Natural killer cell (primary cell): ENCODE measurements at regions of chr19 and their contacts with region 1.

Region 1: DNA sequence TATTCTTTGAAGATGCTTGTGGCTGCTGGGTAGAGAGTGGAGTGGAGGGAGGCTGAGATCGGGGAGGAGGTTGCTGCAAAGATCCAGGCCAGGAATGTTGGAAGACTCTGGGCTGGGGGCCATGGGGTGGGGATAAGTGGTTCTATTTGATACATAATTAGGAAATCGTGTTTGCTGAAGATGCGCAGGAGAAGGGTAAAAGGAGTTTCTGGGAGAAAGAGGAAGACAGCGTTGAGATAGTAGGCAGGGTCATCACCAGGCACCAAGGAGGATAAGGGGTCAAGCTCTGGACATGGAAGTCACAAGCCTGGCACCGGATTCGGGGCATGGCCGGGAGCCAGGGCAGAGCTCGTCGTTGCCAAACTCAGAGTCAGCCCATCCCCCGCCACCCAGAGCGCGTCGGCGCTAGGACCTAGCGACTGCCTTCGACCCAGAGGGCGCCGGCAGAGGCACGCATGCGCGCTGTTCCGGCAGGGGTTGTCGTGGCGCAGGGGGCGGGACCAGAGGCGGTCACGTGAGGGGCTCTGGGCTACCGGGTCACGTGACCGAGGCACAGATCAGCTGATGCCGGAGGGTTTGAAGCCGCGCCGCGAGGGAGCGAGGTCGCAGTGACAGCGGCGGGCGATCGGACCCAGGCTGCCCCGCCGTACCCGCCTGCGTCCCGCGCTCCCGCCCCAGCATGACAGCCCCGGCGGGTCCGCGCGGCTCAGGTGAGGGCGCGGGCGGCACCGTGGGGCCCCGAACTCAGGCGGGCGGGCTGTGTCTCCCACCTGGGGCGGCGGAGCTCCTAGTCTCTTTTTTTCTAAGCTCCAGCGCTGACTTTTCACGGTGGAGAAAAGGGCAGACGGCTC is at the start of gene MCOLN1:
- DNase-seq: peak; percentile 100
- ATAC-seq: peak; percentile 93 to 96 (median 95)
- H3K4me3 ChIP-seq: peak within 1 kb of the TSS; percentile 43
- H3K4me3 Mint-ChIP-seq: peak within 1 kb of the TSS; percentile 92
- H3K27ac ChIP-seq: no peak within 1 kb of the TSS
- H3K27ac Mint-ChIP-seq: peak within 1 kb of the TSS; percentile 68 to 87
- H3K4me1 ChIP-seq: peaks cover 18% of the 10 kb centered on the region
- H3K4me1 Mint-ChIP-seq: peaks cover 11% of the 10 kb centered on the region in 2 donors
- H3K27me3 ChIP-seq: no peaks in the 10 kb centered on the region
- H3K27me3 Mint-ChIP-seq: no peaks in the 10 kb centered on the region
- CTCF ChIP-seq: no peak
- total RNA-seq, gene MCOLN1: 22.9 to 37.6 (median 27.8) TPM

Region 2: GRCh38 chr19:7533925-7534480 is 11.7 kb after region 1 on chr19:
- intact Hi-C with region 1: loop called (anchors 1 kb)
- DNase-seq: peak; percentile 77 to 92
- ATAC-seq: peak; percentile 54 to 66 (median 64)
- H3K4me3 ChIP-seq: peak overlapping the region; percentile 96
- H3K4me3 Mint-ChIP-seq: peak overlapping the region; percentile 96
- H3K27ac ChIP-seq: peak overlapping the region; percentile 66
- H3K27ac Mint-ChIP-seq: peak overlapping the region; percentile 87 to 93
- H3K4me1 ChIP-seq: peaks cover 32% of the 10 kb centered on the region
- H3K4me1 Mint-ChIP-seq: peaks cover 17 to 23% of the 10 kb centered on the region in 2 donors
- H3K27me3 ChIP-seq: no peaks in the 10 kb centered on the region
- H3K27me3 Mint-ChIP-seq: no peaks in the 10 kb centered on the region
- CTCF ChIP-seq: no peak